Psoas muscle (tissue), 8 donors: ENCODE measurements at regions of chr10 and their contacts with region 1.

Region 1: GRCh38 chr10:69678005-69678654 is 48.1 kb downstream of the FAM241B start:
- DNase-seq: no peak
- ATAC-seq: no peak
- H3K4me3 ChIP-seq: no peak overlapping the region
- H3K27ac ChIP-seq: no peak overlapping the region
- H3K4me1 ChIP-seq: no peaks in the 10 kb centered on the region
- H3K27me3 ChIP-seq: peaks cover 0 to 4% (median 2%) of the 10 kb centered on the region in 3 donors
- CTCF ChIP-seq: no peak

Region 2: DNA sequence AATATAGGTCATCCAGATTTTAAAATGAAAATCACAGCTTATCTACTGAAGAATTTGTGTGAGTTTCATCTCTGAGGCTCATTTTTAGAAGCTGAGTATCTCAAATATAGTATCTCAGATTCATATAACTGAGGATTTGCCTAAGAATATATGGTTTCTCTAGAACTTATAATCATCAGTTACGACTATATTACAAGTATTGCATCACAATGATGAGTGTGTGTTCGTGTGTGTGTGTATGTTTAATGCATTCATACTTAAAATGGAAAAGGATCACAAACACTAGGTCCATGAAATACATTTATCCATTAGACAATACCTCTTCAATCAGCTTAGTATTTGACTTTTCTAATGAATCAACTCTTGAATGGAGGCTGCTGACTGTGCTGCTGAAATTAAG is 1292.4 kb before region 1 on chr10:
- intact Hi-C with region 1: loop called in 1 of 2 experiments (anchors 5 kb)
- DNase-seq: no peak
- ATAC-seq: no peak
- H3K4me3 ChIP-seq: no peak overlapping the region
- H3K27ac ChIP-seq: no peak overlapping the region
- H3K4me1 ChIP-seq: no peaks in the 10 kb centered on the region
- H3K27me3 ChIP-seq: no peaks in the 10 kb centered on the region
- CTCF ChIP-seq: no peak

Region 3: GRCh38 chr10:69474742-69475432 is 203.2 kb before region 1 on chr10:
- intact Hi-C with region 1: no loop called
- DNase-seq: peak in 1 of 2 donors; percentile 64
- ATAC-seq: peak; percentile 72 to 92 (median 84)
- H3K4me3 ChIP-seq: peak overlapping the region; percentile 28
- H3K27ac ChIP-seq: peak overlapping the region; percentile 89
- H3K4me1 ChIP-seq: peaks cover 74% of the 10 kb centered on the region
- H3K27me3 ChIP-seq: no peaks in the 10 kb centered on the region
- CTCF ChIP-seq: no peak